ENCODE measurements at regions of chr16 and their contacts with region 1.

Region 1: DNA sequence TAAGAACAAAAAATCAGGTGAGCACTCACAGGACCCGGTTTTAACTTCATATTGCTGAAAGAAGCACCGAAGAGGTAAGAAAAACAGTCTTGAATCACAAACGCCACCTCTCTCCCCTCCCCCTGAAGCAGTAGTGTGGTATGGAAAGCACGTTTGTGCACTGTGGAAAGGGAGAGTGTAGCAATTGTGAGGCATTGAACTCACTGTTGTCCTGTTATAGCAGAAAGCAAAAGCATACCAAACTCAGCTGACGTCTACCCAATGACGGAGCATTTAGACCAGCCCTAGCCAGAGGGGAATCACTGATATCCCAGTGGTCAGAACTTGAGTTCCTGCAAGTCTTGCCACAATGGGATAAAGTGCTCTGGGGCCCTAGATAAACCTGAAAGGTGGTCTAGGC is 98.8 kb downstream of the DYNLRB2 start:
- DNase-seq: no peak
- H3K4me3 ChIP-seq: no peak overlapping the region
- H3K27ac ChIP-seq: no peak overlapping the region
- H3K4me1 ChIP-seq: no peaks in the 10 kb centered on the region
- H3K27me3 ChIP-seq: no peaks in the 10 kb centered on the region
- CTCF ChIP-seq: no peak
- POLR2A ChIP-seq: no peak

Region 2: DNA sequence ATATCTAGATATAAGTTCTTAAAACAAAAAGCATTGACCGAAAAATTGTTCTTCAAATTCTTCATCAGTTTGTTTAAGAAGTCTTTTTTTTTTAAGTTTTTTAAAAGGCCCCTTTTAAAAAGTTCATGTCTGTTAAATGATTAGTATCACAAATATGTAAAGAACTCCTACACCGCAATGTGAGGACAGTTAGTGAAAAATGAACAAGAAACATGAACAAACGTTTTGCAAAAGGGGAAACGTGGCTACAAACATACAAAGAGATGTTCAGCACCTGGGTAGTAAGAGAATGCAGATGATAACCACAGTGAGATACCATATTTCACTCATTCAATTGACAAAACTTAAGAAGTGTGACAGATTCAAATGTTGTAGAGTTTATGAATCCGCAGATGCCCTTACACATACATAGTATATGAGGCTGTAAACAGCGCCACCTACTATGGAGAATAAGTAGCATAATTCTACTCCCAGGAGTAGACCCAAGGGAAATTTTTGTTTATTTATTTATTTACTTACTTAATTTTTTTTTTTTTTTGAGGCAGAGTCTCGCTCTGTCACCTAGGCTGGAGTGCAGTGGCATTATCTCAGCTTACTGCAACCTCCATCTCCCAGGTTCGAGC is 710.5 kb after region 1 on chr16:
- intact Hi-C with region 1: loop called (anchors 10 kb)
- DNase-seq: no peak
- H3K4me3 ChIP-seq: no peak overlapping the region
- H3K27ac ChIP-seq: no peak overlapping the region
- H3K4me1 ChIP-seq: no peaks in the 10 kb centered on the region
- H3K27me3 ChIP-seq: no peaks in the 10 kb centered on the region
- CTCF ChIP-seq: no peak
- POLR2A ChIP-seq: no peak

Measured in breast epithelium (tissue), 4 donors.